ENCODE measurements at regions of chr7 and their contacts with region 1.

Region 1: GRCh38 chr7:45136106-45137060 is 21.2 kb upstream of the RAMP3 start:
- DNase-seq: peak; percentile 80
- ATAC-seq: peak; percentile 97
- H3K4me3 ChIP-seq: no peak overlapping the region
- H3K4me3 Mint-ChIP-seq: no peak overlapping the region
- H3K27ac ChIP-seq: no peak overlapping the region
- H3K27ac Mint-ChIP-seq: no peak overlapping the region
- H3K4me1 ChIP-seq: peaks cover 5 to 18% of the 10 kb centered on the region in 2 donors
- H3K4me1 Mint-ChIP-seq: peaks cover 17% of the 10 kb centered on the region
- H3K27me3 ChIP-seq: peaks cover 0 to 3% (median 0%) of the 10 kb centered on the region in 4 experiments
- H3K27me3 Mint-ChIP-seq: no peaks in the 10 kb centered on the region
- CTCF ChIP-seq: peak; percentile 91

Region 2: DNA sequence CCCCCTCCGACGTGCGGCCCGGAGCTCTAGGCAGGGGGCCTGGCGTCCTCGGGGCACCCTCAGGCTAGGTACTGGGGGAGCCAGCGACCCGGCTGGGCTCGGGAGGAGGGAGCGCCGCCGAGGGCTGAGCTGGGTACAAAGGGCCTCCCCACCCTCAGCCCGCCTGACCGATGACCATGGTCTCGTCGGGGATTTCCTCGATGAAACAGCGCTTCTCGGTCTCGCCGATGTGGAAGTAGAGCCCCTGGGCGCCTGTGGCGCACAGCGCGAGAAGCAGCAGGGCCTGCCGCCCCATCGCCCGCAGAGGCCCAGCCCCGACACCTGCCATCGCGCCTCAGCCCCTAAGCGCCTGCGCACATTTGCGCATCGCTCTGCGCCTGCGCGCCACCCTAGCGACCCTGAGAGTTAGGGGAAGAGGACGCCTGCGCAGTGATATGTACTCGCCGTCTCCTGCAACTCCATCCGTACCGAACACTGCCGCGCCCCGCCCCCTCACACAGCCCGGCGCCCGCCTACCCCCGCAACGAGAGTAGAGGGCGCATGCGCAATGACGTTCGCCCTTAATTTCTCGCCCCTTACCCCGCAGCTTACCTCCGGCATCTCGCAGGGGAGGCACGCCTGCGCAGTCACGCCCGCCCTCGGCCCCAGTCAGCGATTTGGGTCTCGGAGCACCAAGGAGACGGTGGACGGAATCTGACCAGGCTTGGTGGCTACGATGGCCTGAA is 554.3 kb before region 1 on chr7 and contains the start of gene TMED4:
- CTCF ChIA-PET with region 1: interaction called, 10 read pairs
- POLR2A ChIA-PET with region 1: no interaction called
- intact Hi-C with region 1: no loop called
- DNase-seq: peak; percentile 100
- ATAC-seq: peak; percentile 92
- H3K4me3 ChIP-seq: peak within 1 kb of the TSS; percentile 72 to 99 (median 88)
- H3K4me3 Mint-ChIP-seq: peak within 1 kb of the TSS; percentile 96
- H3K27ac ChIP-seq: peak within 1 kb of the TSS; percentile 92 to 97
- H3K27ac Mint-ChIP-seq: peak within 1 kb of the TSS; percentile 99
- H3K4me1 ChIP-seq: peaks cover 21% of the 10 kb centered on the region in 2 donors
- H3K4me1 Mint-ChIP-seq: peaks cover 28% of the 10 kb centered on the region
- H3K27me3 ChIP-seq: no peaks in the 10 kb centered on the region
- H3K27me3 Mint-ChIP-seq: no peaks in the 10 kb centered on the region
- CTCF ChIP-seq: no peak
- total RNA-seq, gene TMED4: 84.0 and 84.1 TPM in 2 replicates

Region 3: DNA sequence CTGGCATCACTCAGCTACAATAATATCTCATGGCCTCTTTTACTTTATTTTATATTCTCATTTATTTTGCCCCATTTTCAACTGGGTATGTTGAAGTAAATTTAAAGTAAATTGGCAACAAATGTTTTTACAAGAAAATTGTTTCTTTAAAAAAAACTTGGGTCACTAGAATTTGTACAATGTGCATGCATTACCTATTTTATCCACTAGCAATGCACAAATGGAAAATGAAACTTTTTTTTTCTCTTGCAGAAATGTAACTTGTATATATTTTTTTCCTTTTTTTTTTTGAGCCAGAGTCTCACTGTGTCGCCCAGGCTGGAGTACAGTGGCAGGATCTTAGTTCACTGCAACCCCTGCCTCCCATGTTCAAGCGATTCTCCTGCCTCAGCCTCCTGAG is 278.2 kb before region 1 on chr7:
- CTCF ChIA-PET with region 1: interaction called, 189 read pairs
- POLR2A ChIA-PET with region 1: interaction called, 5 read pairs
- intact Hi-C with region 1: loop called (anchors 1 kb)
- DNase-seq: no peak
- ATAC-seq: no peak
- H3K4me3 ChIP-seq: no peak overlapping the region
- H3K4me3 Mint-ChIP-seq: no peak overlapping the region
- H3K27ac ChIP-seq: no peak overlapping the region
- H3K27ac Mint-ChIP-seq: no peak overlapping the region
- H3K4me1 ChIP-seq: no peaks in the 10 kb centered on the region
- H3K4me1 Mint-ChIP-seq: peaks cover 4% of the 10 kb centered on the region
- H3K27me3 ChIP-seq: no peaks in the 10 kb centered on the region
- H3K27me3 Mint-ChIP-seq: peaks cover 5% of the 10 kb centered on the region
- CTCF ChIP-seq: peak; percentile 43

Region 4: GRCh38 chr7:44973610-44974401 is 162.6 kb before region 1 on chr7:
- CTCF ChIA-PET with region 1: interaction called, 125 read pairs
- POLR2A ChIA-PET with region 1: no interaction called
- intact Hi-C with region 1: loop called (anchors 1 kb)
- DNase-seq: no peak
- ATAC-seq: no peak
- H3K4me3 ChIP-seq: no peak overlapping the region
- H3K4me3 Mint-ChIP-seq: no peak overlapping the region
- H3K27ac ChIP-seq: no peak overlapping the region
- H3K27ac Mint-ChIP-seq: peak overlapping the region; percentile 15
- H3K4me1 ChIP-seq: peaks cover 14 to 41% of the 10 kb centered on the region in 2 donors
- H3K4me1 Mint-ChIP-seq: peaks cover 38% of the 10 kb centered on the region
- H3K27me3 ChIP-seq: no peaks in the 10 kb centered on the region
- H3K27me3 Mint-ChIP-seq: no peaks in the 10 kb centered on the region
- CTCF ChIP-seq: peak; percentile 41

Region 5: GRCh38 chr7:45111298-45112223 is 24.8 kb before region 1 on chr7 and contains the start of gene TBRG4:
- CTCF ChIA-PET with region 1: interaction called, 22 read pairs
- POLR2A ChIA-PET with region 1: no interaction called
- intact Hi-C with region 1: loop called (anchors 1 kb)
- DNase-seq: peak; percentile 96
- ATAC-seq: peak; percentile 94
- H3K4me3 ChIP-seq: peak within 1 kb of the TSS; percentile 67 to 93 (median 72)
- H3K4me3 Mint-ChIP-seq: peak within 1 kb of the TSS; percentile 91
- H3K27ac ChIP-seq: peak within 1 kb of the TSS; percentile 91 to 98
- H3K27ac Mint-ChIP-seq: peak within 1 kb of the TSS; percentile 95
- H3K4me1 ChIP-seq: peaks cover 22 to 38% of the 10 kb centered on the region in 2 donors
- H3K4me1 Mint-ChIP-seq: peaks cover 40% of the 10 kb centered on the region
- H3K27me3 ChIP-seq: no peaks in the 10 kb centered on the region
- H3K27me3 Mint-ChIP-seq: no peaks in the 10 kb centered on the region
- CTCF ChIP-seq: no peak
- total RNA-seq, gene TBRG4: 111 and 116 TPM in 2 replicates

Region 6: DNA sequence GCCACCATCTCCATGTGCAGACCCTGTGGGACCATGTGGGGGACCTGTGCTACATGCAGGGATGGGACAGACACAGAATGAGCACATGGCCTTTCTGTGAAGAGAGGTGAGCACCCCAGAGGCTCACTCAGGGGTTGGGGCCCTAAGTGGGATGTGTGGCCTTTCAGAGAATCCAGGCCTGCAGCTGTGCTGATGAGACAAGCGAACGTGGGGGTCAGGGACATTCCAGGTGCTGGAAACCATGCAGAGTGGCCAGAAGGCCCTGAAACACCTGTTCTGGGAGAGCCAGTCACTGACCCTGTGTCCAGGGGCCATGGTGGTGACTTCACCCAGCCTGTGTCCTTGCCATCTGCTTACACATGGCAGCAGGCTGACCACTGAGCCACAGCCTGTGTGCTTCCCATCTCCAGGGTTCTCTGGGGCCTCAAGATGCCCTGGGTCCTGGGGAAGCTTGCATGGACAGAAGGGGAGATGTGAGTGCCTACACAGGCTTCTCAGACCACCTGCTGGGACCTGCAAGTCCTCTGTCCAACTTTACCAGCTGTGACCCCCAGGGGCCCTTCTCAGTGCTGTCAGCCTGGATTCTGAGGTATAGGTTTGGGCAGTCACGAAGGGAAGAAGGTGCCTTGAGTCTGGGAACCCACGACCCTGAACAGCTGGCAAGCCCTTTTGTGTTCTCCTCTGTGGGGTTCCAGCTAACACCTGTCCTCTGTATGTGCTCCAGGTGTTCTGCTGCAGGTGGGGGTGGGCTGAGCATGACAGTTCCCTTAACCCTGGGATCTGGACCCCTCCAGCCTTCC is 38.8 kb after region 1 on chr7:
- CTCF ChIA-PET with region 1: no interaction called
- POLR2A ChIA-PET with region 1: no interaction called
- intact Hi-C with region 1: no loop called
- DNase-seq: no peak
- ATAC-seq: no peak
- H3K4me3 ChIP-seq: no peak overlapping the region
- H3K4me3 Mint-ChIP-seq: no peak overlapping the region
- H3K27ac ChIP-seq: no peak overlapping the region
- H3K27ac Mint-ChIP-seq: no peak overlapping the region
- H3K4me1 ChIP-seq: no peaks in the 10 kb centered on the region
- H3K4me1 Mint-ChIP-seq: no peaks in the 10 kb centered on the region
- H3K27me3 ChIP-seq: peaks cover 0 to 10% (median 1%) of the 10 kb centered on the region in 4 experiments
- H3K27me3 Mint-ChIP-seq: peaks cover 16% of the 10 kb centered on the region
- CTCF ChIP-seq: no peak